ENCODE measurements at regions of chr18 and their contacts with region 1.

Region 1: GRCh38 chr18:13726232-13726971 is at the starts of genes FAM210A and RNMT:
- DNase-seq: peak; percentile 96
- ATAC-seq: peak; percentile 97 to 99 (median 98)
- H3K4me3 ChIP-seq: peak within 1 kb of the TSS; percentile 75 to 95 (median 85)
- H3K27ac ChIP-seq: peak within 1 kb of the TSS; percentile 81 to 97 (median 94)
- H3K4me1 ChIP-seq: peaks cover 0 to 49% (median 28%) of the 10 kb centered on the region in 9 donors
- H3K27me3 ChIP-seq: no peaks in the 10 kb centered on the region
- CTCF ChIP-seq: peak in 4 of 9 donors; percentile 12 to 57 (median 48)
- total RNA-seq, gene FAM210A: 41.6 to 84.8 (median 58.2) TPM
- total RNA-seq, gene RNMT: 21.1 to 37.0 (median 34.2) TPM

Region 2: GRCh38 chr18:13566941-13567746 is 159.3 kb before region 1 on chr18:
- intact Hi-C with region 1: loop called in 2 of 10 experiments (anchors 5 to 10 kb)
- DNase-seq: peak; percentile 27 to 36
- ATAC-seq: peak in 3 of 8 donors; percentile 16 to 40 (median 23)
- H3K4me3 ChIP-seq: no peak overlapping the region
- H3K27ac ChIP-seq: peak overlapping the region in 7 of 10 donors; percentile 5 to 90 (median 78)
- H3K4me1 ChIP-seq: peaks cover 15 to 77% (median 37%) of the 10 kb centered on the region in 9 donors
- H3K27me3 ChIP-seq: no peaks in the 10 kb centered on the region
- CTCF ChIP-seq: no peak

Region 3: DNA sequence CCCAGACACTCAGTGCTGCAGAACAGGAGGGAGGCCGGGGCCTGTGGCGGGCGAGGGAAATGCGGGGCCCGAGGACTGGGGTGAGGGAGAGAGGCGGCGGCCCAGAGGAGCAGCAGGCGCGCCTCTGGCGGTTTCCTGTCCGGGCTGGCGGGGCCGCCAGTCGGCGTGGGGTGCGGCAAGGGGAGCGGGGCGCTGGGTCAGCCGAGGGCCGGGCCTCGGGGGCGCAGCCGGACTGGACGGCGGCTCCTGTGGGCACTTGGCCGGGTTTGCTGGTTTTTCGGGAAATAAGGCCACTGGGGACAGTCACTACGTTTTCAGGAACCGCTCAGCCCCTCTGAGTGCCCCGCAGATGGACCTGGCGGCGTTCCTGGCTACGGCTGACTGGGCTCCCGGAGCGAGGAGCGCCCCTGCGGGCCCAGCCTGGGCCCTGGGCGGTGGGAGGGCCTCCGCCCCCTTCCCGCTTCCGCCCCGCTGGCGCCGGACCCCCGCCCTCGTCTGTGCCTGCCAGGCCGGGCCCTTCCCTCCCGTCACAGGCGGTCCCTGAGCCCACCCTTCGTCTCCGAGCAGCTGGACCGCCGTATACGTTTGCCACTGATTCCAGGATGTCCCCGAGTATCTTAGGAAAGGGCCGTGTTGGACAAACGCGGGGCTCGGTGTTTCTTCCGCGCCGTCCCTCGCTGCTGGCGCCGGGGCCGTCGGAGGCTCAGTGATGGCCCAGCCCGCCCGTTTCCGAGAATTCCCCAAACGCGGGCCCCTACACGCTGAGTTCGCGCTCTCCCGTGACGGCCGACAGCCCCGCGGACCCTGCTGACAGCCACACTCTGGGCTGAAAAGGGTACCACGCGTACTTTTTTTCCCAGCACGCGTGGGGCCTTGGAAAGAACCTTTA is 84.6 kb before region 1 on chr18:
- intact Hi-C with region 1: loop called in 3 of 10 experiments (anchors 5 to 10 kb)
- DNase-seq: peak; percentile 55 to 64
- ATAC-seq: peak; percentile 70 to 84 (median 78)
- H3K4me3 ChIP-seq: peak overlapping the region in 9 of 10 donors; percentile 27 to 53 (median 46)
- H3K27ac ChIP-seq: peak overlapping the region; percentile 63 to 91 (median 82)
- H3K4me1 ChIP-seq: peaks cover 11 to 51% (median 27%) of the 10 kb centered on the region in 9 donors
- H3K27me3 ChIP-seq: peaks cover 0 to 12% (median 0%) of the 10 kb centered on the region in 7 donors
- CTCF ChIP-seq: peak in 3 of 9 donors; percentile 7 to 28 (median 21)

Region 4: GRCh38 chr18:13658436-13659204 is 67.8 kb before region 1 on chr18:
- intact Hi-C with region 1: no loop called
- DNase-seq: no peak
- ATAC-seq: peak in 2 of 8 donors; percentile 10 to 12
- H3K4me3 ChIP-seq: no peak overlapping the region
- H3K27ac ChIP-seq: no peak overlapping the region
- H3K4me1 ChIP-seq: peaks cover 12 to 44% (median 33%) of the 10 kb centered on the region in 9 donors
- H3K27me3 ChIP-seq: no peaks in the 10 kb centered on the region
- CTCF ChIP-seq: no peak

Region 5: GRCh38 chr18:13823707-13824395 is 97.4 kb after region 1 on chr18 and contains the start of gene MC5R:
- intact Hi-C with region 1: no loop called
- DNase-seq: peak; percentile 32 to 70
- ATAC-seq: peak; percentile 75 to 96 (median 84)
- H3K4me3 ChIP-seq: peak within 1 kb of the TSS; percentile 32 to 57 (median 46)
- H3K27ac ChIP-seq: no peak within 1 kb of the TSS
- H3K4me1 ChIP-seq: peaks cover 0 to 4% (median 0%) of the 10 kb centered on the region in 9 donors
- H3K27me3 ChIP-seq: peaks cover 3 to 58% (median 50%) of the 10 kb centered on the region in 7 donors
- CTCF ChIP-seq: peak; percentile 70 to 87 (median 81)
- total RNA-seq, gene MC5R: not detected